ENCODE measurements at regions of chr4 and their contacts with region 1.

Region 1: DNA sequence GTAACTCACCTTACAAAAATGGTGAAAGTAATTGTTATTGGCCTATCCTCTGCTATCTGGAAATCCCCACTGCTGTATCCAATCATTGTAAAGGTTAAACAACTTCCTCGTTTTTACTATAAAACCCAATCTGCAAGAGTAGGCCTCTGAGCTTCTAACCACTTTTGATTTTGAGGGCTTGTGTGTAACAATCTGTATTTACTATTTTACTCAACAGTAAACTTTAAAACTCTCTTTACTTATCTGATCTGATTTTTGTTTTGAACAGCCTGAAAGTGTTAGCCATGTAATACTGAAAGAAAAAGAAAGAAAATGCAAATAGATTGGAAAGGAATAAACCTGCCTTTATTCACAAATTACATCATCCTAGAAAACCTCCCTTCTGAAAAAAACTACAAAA is 63.1 kb downstream of the SLC10A7 start:
- DNase-seq: no peak
- H3K4me3 Mint-ChIP-seq: peak overlapping the region; percentile 63
- H3K27ac Mint-ChIP-seq: peak overlapping the region; percentile 88
- H3K4me1 Mint-ChIP-seq: peaks cover 26% of the 10 kb centered on the region
- H3K27me3 Mint-ChIP-seq: no peaks in the 10 kb centered on the region

Region 2: GRCh38 chr4:145097821-145098674 is 1360.5 kb before region 1 on chr4 and contains the starts of genes ABCE1 and ANAPC10:
- intact Hi-C with region 1: loop called (anchors 10 kb)
- DNase-seq: peak; percentile 94
- H3K4me3 Mint-ChIP-seq: peak within 1 kb of the TSS; percentile 92
- H3K27ac Mint-ChIP-seq: peak within 1 kb of the TSS; percentile 100
- H3K4me1 Mint-ChIP-seq: peaks cover 27% of the 10 kb centered on the region
- H3K27me3 Mint-ChIP-seq: no peaks in the 10 kb centered on the region
- total RNA-seq, gene ABCE1: 155 and 176 TPM in 2 replicates
- total RNA-seq, gene ANAPC10: 25.4 and 32.1 TPM in 2 replicates

Region 3: DNA sequence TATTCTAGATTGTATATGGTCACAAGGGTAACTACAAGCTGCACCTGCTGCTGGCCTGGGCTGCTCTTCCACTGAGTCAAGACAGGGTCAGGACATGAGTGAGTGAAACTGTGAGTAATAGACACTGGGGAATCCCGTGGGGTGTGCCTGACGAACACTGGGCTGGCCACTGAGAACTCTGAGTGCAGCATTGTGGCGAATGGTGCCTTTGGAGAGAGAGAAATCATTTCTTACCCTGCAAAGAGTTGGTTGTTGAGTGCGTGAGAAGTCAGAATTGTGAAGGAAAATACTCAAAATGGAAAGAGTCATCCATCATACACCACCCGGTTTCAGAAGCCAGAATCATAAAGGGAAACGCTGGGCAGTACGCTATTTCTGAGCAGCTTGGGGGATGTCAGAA is 326.1 kb before region 1 on chr4:
- intact Hi-C with region 1: loop called (anchors 1 kb)
- DNase-seq: peak; percentile 28
- H3K4me3 Mint-ChIP-seq: no peak overlapping the region
- H3K27ac Mint-ChIP-seq: peak overlapping the region; percentile 61
- H3K4me1 Mint-ChIP-seq: peaks cover 20% of the 10 kb centered on the region
- H3K27me3 Mint-ChIP-seq: peaks cover 8% of the 10 kb centered on the region

Region 4: GRCh38 chr4:146243141-146243882 is 215.3 kb before region 1 on chr4:
- intact Hi-C with region 1: loop called (anchors 1 kb)
- DNase-seq: peak; percentile 16
- H3K4me3 Mint-ChIP-seq: peak overlapping the region; percentile 16
- H3K27ac Mint-ChIP-seq: peak overlapping the region; percentile 84
- H3K4me1 Mint-ChIP-seq: peaks cover 35% of the 10 kb centered on the region
- H3K27me3 Mint-ChIP-seq: peaks cover 5% of the 10 kb centered on the region

Region 5: DNA sequence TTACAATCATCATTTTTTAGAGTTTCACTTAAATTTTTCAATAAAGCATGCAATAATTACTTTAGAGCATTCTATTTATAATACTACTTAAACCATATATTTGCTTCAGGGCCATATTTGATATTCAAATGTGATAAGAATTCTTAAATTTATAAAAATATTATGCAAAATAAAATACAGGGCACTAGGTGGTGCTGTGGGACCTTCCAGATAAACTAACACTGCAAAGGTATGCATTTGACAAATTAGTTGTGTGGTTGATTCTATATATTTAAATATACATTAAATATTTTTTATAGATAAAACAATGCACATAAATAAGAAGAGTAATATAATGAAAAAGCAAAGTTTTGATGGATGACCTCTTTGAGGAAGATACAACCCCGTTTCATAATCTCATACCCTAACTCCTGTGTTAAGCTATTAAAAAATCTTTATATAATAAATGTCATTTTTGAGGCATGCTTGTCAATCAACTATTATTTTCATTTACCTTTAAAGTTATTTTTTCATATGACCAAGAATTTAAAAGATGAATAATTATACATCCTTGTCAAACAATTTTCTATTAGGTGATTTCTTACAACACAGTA is 115.9 kb before region 1 on chr4:
- intact Hi-C with region 1: loop called (anchors 2 kb)
- DNase-seq: no peak
- H3K4me3 Mint-ChIP-seq: no peak overlapping the region
- H3K27ac Mint-ChIP-seq: no peak overlapping the region
- H3K4me1 Mint-ChIP-seq: peaks cover 7% of the 10 kb centered on the region
- H3K27me3 Mint-ChIP-seq: peaks cover 2% of the 10 kb centered on the region

Region 6: GRCh38 chr4:146495277-146495676 is 36.7 kb after region 1 on chr4:
- intact Hi-C with region 1: loop called (anchors 1 kb)
- DNase-seq: no peak
- H3K4me3 Mint-ChIP-seq: no peak overlapping the region
- H3K27ac Mint-ChIP-seq: no peak overlapping the region
- H3K4me1 Mint-ChIP-seq: peaks cover 17% of the 10 kb centered on the region
- H3K27me3 Mint-ChIP-seq: no peaks in the 10 kb centered on the region